Heart right ventricle (tissue), 16 donors: ENCODE measurements at regions of chr19 and their contacts with region 1.

Region 1: GRCh38 chr19:20247016-20247683 is 80.1 kb downstream of the ZNF486 start:
- DNase-seq: peak; percentile 11 to 35
- ATAC-seq: peak in 4 of 8 donors; percentile 46 to 70 (median 58)
- H3K4me3 ChIP-seq: no peak overlapping the region
- H3K27ac ChIP-seq: no peak overlapping the region
- H3K4me1 ChIP-seq: no peaks in the 10 kb centered on the region
- H3K27me3 ChIP-seq: no peaks in the 10 kb centered on the region
- CTCF ChIP-seq: peak; percentile 20 to 70 (median 51)

Region 2: GRCh38 chr19:20124879-20125278 is 122.3 kb before region 1 on chr19:
- intact Hi-C with region 1: no loop called
- DNase-seq: no peak
- ATAC-seq: no peak
- H3K4me3 ChIP-seq: no peak overlapping the region
- H3K27ac ChIP-seq: no peak overlapping the region
- H3K4me1 ChIP-seq: no peaks in the 10 kb centered on the region
- H3K27me3 ChIP-seq: no peaks in the 10 kb centered on the region
- CTCF ChIP-seq: no peak

Region 3: DNA sequence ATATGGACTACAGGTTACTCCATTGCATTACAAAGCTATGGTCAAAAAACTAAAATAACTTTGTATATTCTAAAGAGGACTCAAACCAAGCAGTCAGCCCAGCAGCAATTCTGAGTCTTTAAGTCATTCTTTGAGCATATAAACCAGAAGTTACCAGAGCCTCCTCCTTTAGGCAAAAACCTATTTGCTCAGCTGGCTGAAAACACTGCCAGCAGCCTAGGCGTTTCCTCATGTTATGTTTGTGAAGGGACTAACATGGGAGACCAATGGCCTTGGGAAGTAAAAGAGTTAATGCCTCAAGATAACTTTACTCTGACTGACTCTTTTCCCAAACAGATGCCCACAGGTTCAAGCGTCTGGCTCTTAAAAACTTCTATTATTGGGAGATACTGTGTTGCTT is 368.9 kb after region 1 on chr19:
- intact Hi-C with region 1: no loop called
- DNase-seq: no peak
- ATAC-seq: no peak
- H3K4me3 ChIP-seq: no peak overlapping the region
- H3K27ac ChIP-seq: no peak overlapping the region
- H3K4me1 ChIP-seq: no peaks in the 10 kb centered on the region
- H3K27me3 ChIP-seq: no peaks in the 10 kb centered on the region
- CTCF ChIP-seq: no peak

Region 4: GRCh38 chr19:21308773-21309172 is 1061.6 kb after region 1 on chr19:
- intact Hi-C with region 1: loop called in 1 of 10 experiments (anchors 5 kb)
- DNase-seq: no peak
- ATAC-seq: no peak
- H3K4me3 ChIP-seq: no peak overlapping the region
- H3K27ac ChIP-seq: no peak overlapping the region
- H3K4me1 ChIP-seq: peaks cover 0 to 2% (median 0%) of the 10 kb centered on the region in 9 donors
- H3K27me3 ChIP-seq: no peaks in the 10 kb centered on the region
- CTCF ChIP-seq: no peak